ENCODE measurements at regions of chr19 and their contacts with region 1.

Region 1: DNA sequence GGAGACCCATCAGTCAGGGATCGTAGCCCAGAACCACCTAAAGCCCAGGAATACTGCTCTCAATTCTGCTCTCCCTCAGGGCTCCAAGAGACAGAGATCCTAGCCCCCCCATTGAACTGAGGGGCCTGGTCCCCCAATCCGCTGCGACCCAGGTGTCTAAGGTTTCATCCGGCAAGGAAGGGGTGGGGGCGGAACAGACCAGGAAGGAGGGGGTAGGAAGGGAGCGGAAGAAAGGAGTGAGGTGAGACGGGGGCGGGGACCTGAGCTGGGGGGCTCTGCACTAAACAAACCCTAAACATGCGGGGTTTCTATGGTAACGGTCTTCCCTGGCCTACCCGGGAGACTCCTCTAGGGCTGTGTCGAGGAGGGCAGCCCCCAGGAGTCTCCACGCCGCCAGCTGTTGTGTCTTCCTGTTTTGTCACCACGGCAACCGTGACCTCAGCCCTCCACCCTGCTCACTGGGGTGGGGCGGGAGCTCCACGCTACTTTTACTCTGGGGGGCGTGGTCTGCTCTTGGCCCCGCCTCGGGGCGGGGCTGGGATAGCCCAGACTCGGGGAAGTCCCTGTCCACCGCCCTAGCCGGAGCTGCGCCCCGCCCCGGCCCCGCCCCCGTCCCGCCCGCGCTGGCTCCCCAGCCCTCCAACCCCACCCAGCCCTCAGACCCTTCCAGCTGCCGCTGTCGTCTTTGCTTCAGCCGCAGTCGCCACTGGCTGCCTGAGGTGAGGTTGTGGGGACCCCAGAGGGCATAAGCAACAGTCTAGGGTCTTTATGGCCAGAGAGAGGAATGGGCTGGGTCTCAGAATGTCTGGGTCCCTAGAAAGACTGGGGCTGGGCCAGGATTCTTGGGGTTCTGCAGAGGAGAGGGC is at the start of gene MYADM:
- DNase-seq: peak; percentile 100
- H3K4me3 Mint-ChIP-seq: peak within 1 kb of the TSS; percentile 99
- H3K27ac Mint-ChIP-seq: peak within 1 kb of the TSS; percentile 98
- H3K4me1 Mint-ChIP-seq: peaks cover 38% of the 10 kb centered on the region
- H3K27me3 Mint-ChIP-seq: peaks cover 3% of the 10 kb centered on the region
- total RNA-seq, gene MYADM: 65.6 and 69.0 TPM in 2 replicates

Region 2: DNA sequence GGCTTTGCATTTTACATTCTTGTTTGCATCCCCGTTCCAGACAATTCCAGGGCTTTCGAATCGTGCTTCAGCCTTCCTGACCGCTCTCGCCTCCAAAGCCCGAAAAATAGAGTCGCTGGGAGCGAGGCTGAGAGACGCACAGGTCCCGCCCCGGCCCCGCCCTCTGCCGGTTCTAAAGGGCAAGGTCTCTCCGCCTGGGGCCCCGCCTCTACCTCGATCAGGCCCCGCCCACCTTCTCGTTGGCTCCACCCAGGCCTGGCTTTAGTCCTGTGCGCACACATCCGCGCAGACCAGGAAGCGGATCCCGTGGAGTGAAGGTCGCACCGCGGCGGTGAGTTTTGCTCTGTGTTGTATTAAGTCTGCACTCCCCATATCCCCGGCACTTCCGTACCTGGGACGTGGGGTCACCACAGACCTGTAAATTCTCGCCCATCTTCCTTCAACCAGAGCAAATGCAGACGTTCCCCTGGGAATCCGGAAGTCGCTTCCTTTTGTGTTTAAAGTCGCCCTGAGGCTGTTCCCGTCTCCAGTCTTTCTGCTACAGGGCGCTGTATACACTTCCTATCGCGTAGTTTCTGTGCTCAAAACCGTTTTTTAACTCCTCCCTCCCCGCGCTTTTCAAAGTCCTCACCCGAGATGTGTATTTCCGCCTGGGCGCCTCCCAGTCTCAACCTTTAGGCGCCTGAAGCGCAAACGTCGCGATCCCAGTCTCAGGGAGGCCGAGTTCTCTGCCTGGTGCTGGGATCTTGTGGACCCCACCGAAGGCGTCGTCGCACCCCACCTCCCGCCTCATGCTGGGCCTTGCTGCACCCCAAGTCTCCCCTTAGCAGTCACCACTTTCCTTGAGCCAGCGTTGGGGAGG is 1297.2 kb before region 1 on chr19 and contains the start of gene ZNF701:
- intact Hi-C with region 1: loop called (anchors 5 kb)
- DNase-seq: peak; percentile 99
- H3K4me3 Mint-ChIP-seq: peak within 1 kb of the TSS; percentile 88
- H3K27ac Mint-ChIP-seq: peak within 1 kb of the TSS; percentile 89
- H3K4me1 Mint-ChIP-seq: peaks cover 23% of the 10 kb centered on the region
- H3K27me3 Mint-ChIP-seq: no peaks in the 10 kb centered on the region
- total RNA-seq, gene ZNF701: 19.3 and 21.0 TPM in 2 replicates

Region 3: DNA sequence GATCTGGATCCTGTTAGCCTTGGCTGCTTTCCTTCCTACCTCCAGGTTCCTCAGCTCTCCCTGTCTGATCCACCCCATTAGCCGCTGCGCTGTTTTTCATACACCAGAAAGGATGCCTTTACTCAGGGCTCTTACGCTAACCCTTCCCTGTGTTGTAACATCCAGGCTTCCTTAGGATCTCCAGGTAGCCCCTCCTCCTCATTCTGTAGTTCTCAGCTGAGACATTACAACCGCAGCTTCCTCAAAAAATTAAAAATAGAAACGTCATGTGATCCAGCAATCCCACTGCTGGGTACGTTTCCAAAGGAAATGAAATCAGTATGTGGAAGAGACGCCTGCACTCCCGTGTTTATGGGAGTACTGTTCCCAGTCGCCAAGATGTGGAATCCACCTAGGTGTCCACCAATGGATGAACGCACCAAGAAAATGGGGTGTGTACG is 18.2 kb before region 1 on chr19:
- intact Hi-C with region 1: loop called (anchors 1 kb)
- DNase-seq: no peak
- H3K4me3 Mint-ChIP-seq: no peak overlapping the region
- H3K27ac Mint-ChIP-seq: no peak overlapping the region
- H3K4me1 Mint-ChIP-seq: peaks cover 15% of the 10 kb centered on the region
- H3K27me3 Mint-ChIP-seq: peaks cover 26% of the 10 kb centered on the region

Region 4: GRCh38 chr19:54102421-54103169 is 235.1 kb after region 1 on chr19 and contains the start of gene NDUFA3:
- intact Hi-C with region 1: loop called (anchors 5 kb)
- DNase-seq: peak; percentile 99
- H3K4me3 Mint-ChIP-seq: peak within 1 kb of the TSS; percentile 99
- H3K27ac Mint-ChIP-seq: peak within 1 kb of the TSS; percentile 97
- H3K4me1 Mint-ChIP-seq: peaks cover 22% of the 10 kb centered on the region
- H3K27me3 Mint-ChIP-seq: no peaks in the 10 kb centered on the region
- total RNA-seq, gene NDUFA3: 105 and 131 TPM in 2 replicates

Region 5: DNA sequence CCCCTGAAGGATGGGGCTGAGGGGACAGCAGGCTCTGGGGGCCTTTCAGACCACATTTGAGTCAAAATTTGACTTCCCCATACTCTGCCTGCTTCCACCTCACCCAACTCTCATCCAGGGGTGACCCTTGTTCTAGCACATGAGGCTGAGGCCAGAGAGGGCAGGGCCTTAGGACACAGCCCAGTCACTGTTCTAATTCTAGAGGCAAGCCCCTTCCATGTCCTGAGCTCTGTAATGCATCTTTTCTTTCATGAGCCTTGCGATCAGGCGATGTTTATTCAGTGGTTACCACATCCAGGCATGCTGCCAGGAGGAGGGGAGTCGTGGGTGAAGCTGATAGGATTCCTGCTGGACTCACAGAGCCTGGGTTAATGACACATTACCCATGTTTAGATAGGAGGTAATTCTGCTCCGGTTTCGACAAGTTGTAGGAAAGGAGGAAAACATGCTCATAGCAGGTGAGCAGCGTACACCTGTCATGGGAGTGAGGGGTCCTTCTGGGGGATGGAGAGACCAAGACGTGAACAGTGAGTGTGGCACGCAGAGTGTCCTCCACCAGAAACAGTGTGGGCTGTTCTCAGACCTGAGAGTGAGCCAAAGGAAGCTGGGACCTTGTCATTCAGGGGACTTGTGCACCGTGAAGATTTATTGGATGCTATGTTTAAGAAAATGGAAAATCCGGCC is 342.5 kb after region 1 on chr19:
- intact Hi-C with region 1: loop called (anchors 2 kb)
- DNase-seq: peak; percentile 62
- H3K4me3 Mint-ChIP-seq: peak overlapping the region; percentile 66
- H3K27ac Mint-ChIP-seq: peak overlapping the region; percentile 90
- H3K4me1 Mint-ChIP-seq: peaks cover 58% of the 10 kb centered on the region
- H3K27me3 Mint-ChIP-seq: no peaks in the 10 kb centered on the region

Measured in activated CD4-positive, alpha-beta T cell treated with anti-CD3 and anti-CD28 coated beads, Interleukin-2, amount 10 ng/mL, durations not matched to agents 24 days and 14 days (primary cell).